K562 (cell line): ENCODE measurements at regions of chr10 and their contacts with region 1.

Region 1: DNA sequence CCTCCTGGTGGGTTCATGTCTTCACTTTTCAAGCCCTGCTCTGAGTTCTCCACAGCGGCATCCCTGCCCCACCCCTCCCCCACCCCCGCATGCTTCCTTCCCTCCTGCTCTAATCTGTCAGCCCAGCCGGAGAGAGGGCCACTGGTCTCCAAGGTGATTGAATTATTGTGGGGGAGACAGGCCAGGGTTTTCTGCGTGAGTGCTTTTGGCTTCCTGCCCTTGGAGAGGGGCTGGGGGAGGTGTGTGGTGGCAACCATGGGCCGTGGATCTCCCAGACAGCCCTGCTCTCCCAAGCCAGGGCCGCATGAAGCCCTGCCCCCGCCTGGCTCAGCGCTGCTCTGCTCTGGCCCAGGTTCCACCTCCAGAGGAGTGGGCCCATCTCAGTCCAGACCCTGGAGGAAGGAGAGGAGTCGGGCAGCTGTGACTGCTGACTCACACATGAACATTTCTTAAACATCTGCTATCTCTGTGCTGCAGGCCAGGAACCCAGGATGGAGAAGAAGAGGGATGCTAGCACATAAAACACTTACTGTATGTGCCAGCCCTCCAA is 109.9 kb downstream of the ZMIZ1 start:
- DNase-seq: peak; percentile 93 to 99 (median 96)
- ATAC-seq: peak; percentile 89
- H3K4me3 ChIP-seq: peak overlapping the region; percentile 8; the same call in 1 of the 2 replicates
- H3K27ac ChIP-seq: peak overlapping the region; percentile 94
- H3K4me1 ChIP-seq: peaks cover 83 to 93% of the 10 kb centered on the region in 2 experiments
- H3K27me3 ChIP-seq: no peaks in the 10 kb centered on the region
- CTCF ChIP-seq: peak; percentile 17 to 38 (median 37); a peak in 4 of 6 replicates
- EP300 ChIP-seq: peak; percentile 89
- POLR2A ChIP-seq: no peak; the same call in 1 of the 2 replicates
- RAD21 ChIP-seq: peak; percentile 51 to 61

Region 2: GRCh38 chr10:79093658-79094411 is 84.9 kb before region 1 on chr10:
- CTCF ChIA-PET with region 1: no interaction called
- POLR2A ChIA-PET with region 1: interaction called, 3 read pairs
- in situ Hi-C with region 1: loop called (anchors 25 kb)
- intact Hi-C with region 1: loop called (anchors 2 kb)
- DNase-seq: peak in 3 of 4 experiments; percentile 45 to 87 (median 82)
- ATAC-seq: peak; percentile 78
- H3K4me3 ChIP-seq: no peak overlapping the region
- H3K27ac ChIP-seq: peak overlapping the region; percentile 51
- H3K4me1 ChIP-seq: peaks cover 57 to 68% of the 10 kb centered on the region in 2 experiments
- H3K27me3 ChIP-seq: no peaks in the 10 kb centered on the region
- CTCF ChIP-seq: no peak
- EP300 ChIP-seq: peak; percentile 91
- POLR2A ChIP-seq: no peak
- RAD21 ChIP-seq: no peak

Region 3: GRCh38 chr10:79137826-79138225 is 40.9 kb before region 1 on chr10:
- CTCF ChIA-PET with region 1: no interaction called
- POLR2A ChIA-PET with region 1: interaction called, 3 read pairs
- in situ Hi-C with region 1: no loop called
- intact Hi-C with region 1: loop called (anchors 2 kb)
- DNase-seq: no peak
- ATAC-seq: no peak
- H3K4me3 ChIP-seq: no peak overlapping the region
- H3K27ac ChIP-seq: no peak overlapping the region
- H3K4me1 ChIP-seq: peaks cover 63 to 66% of the 10 kb centered on the region in 2 experiments
- H3K27me3 ChIP-seq: no peaks in the 10 kb centered on the region
- CTCF ChIP-seq: no peak
- EP300 ChIP-seq: no peak
- POLR2A ChIP-seq: no peak
- RAD21 ChIP-seq: no peak

Region 4: GRCh38 chr10:79149662-79150443 is 28.8 kb before region 1 on chr10:
- CTCF ChIA-PET with region 1: no interaction called
- POLR2A ChIA-PET with region 1: interaction called, 4 read pairs
- in situ Hi-C with region 1: no loop called
- intact Hi-C with region 1: loop called (anchors 1 kb)
- DNase-seq: peak; percentile 92 to 97 (median 94)
- ATAC-seq: peak; percentile 88
- H3K4me3 ChIP-seq: no peak overlapping the region; the same call in 1 of the 2 replicates
- H3K27ac ChIP-seq: peak overlapping the region; percentile 85
- H3K4me1 ChIP-seq: peaks cover 83 to 89% of the 10 kb centered on the region in 2 experiments
- H3K27me3 ChIP-seq: no peaks in the 10 kb centered on the region
- CTCF ChIP-seq: no peak
- EP300 ChIP-seq: peak; percentile 41; the same call in 1 of the 2 replicates
- POLR2A ChIP-seq: peak; percentile 71
- RAD21 ChIP-seq: no peak; a peak in 1 of 4 replicates